Tibial artery (tissue), 4 donors: ENCODE measurements at regions of chr20 and their contacts with region 1.

Region 1: GRCh38 chr20:54207743-54208547 is at the start of gene PFDN4:
- DNase-seq: peak; percentile 81 to 88
- H3K4me3 ChIP-seq: peak within 1 kb of the TSS; percentile 79 to 98
- H3K27ac ChIP-seq: peak within 1 kb of the TSS; percentile 91 to 92
- H3K4me1 ChIP-seq: peaks cover 0 to 30% (median 16%) of the 10 kb centered on the region in 4 donors
- H3K27me3 ChIP-seq: no peaks in the 10 kb centered on the region
- CTCF ChIP-seq: peak; percentile 51 to 80

Region 2: GRCh38 chr20:53578492-53579222 is 629.3 kb before region 1 on chr20:
- intact Hi-C with region 1: loop called (anchors 10 kb)
- DNase-seq: peak in 1 of 2 donors; percentile 41
- H3K4me3 ChIP-seq: peak overlapping the region in 1 of 2 donors; percentile 18
- H3K27ac ChIP-seq: peak overlapping the region; percentile 34 to 54
- H3K4me1 ChIP-seq: peaks cover 0 to 37% (median 25%) of the 10 kb centered on the region in 4 donors
- H3K27me3 ChIP-seq: no peaks in the 10 kb centered on the region
- CTCF ChIP-seq: peak; percentile 79 to 99

Region 3: GRCh38 chr20:53677447-53678314 is 530.3 kb before region 1 on chr20:
- intact Hi-C with region 1: loop called (anchors 10 kb)
- DNase-seq: peak in 1 of 2 donors; percentile 45
- H3K4me3 ChIP-seq: no peak overlapping the region
- H3K27ac ChIP-seq: no peak overlapping the region
- H3K4me1 ChIP-seq: peaks cover 0 to 22% (median 2%) of the 10 kb centered on the region in 4 donors
- H3K27me3 ChIP-seq: no peaks in the 10 kb centered on the region
- CTCF ChIP-seq: no peak